ENCODE measurements at regions of chr17 and their contacts with region 1.

Region 1: DNA sequence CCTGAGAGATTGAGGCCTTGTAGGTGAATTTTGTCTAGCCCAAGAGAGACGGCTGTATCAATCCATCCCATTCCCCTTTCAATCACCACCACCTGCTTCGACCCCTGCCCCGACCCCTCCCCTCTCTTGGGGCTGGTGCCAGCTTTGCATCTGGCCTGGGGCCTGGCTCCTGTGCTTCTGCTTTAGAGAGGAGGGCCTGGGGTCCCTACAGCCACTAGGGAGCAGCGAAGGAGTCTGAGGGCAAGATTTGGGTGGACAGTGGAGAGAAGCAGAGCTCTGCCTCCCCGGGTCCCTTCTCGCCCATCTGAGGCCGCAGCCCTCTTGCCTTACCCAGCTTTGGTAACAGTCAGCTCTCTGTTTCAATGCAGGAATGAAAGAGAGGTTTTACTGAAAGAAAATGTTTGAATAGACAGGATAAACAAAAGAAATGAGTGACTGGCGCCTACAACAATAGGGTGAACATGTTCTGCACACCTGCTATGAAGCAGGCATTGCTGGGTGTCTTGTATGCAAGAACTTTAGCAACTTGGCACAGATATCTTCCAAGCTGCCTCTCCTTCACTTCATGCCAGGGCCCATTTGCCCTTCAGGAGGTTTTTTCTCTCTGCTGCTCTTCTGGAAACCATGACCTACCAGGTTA is 57.4 kb downstream of the SLC47A1 start:
- DNase-seq: no peak
- H3K4me3 ChIP-seq: no peak overlapping the region
- H3K4me3 Mint-ChIP-seq: no peak overlapping the region
- H3K27ac ChIP-seq: no peak overlapping the region
- H3K27ac Mint-ChIP-seq: peak overlapping the region in 2 of 7 donors; percentile 25 to 65
- H3K4me1 ChIP-seq: peaks cover 9 to 24% of the 10 kb centered on the region in 2 donors
- H3K4me1 Mint-ChIP-seq: peaks cover 19% of the 10 kb centered on the region
- H3K27me3 ChIP-seq: no peaks in the 10 kb centered on the region
- H3K27me3 Mint-ChIP-seq: peaks cover 0 to 2% (median 1%) of the 10 kb centered on the region in 3 donors
- CTCF ChIP-seq: no peak

Region 2: DNA sequence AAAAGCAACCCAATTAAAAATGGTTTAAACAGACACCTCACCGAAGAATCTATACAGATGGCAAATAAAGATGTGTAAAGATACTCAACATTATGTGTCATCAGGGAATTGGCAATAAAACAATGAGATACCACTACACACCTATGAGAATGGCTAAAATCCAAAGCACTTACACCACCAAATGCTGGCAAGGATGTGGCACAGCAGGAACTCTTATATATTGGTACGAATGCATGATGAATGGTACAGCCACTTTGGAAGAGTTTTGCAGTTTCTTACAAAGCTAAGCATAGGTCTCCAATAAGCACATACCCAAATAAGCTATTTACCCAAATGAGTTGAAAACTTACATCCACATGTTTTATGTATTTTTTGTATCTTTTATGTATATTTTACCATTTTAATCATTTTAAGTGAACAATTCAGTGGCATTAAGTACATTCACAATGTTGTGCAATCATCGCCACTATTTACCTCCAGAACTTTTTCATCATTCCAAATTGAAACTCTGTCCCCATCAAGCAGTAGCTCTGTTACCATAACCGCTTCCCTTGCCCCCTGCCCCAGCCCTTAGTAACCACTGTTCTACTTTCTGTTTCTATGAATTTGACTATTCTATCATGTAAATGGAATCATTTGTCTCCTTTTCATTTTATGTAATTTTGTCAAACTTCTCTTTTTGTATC is 50.8 kb after region 1 on chr17:
- intact Hi-C with region 1: loop called in 1 of 2 experiments (anchors 2 kb)
- DNase-seq: no peak
- H3K4me3 ChIP-seq: no peak overlapping the region
- H3K4me3 Mint-ChIP-seq: no peak overlapping the region
- H3K27ac ChIP-seq: no peak overlapping the region
- H3K27ac Mint-ChIP-seq: no peak overlapping the region
- H3K4me1 ChIP-seq: peaks cover 3 to 4% of the 10 kb centered on the region in 2 donors
- H3K4me1 Mint-ChIP-seq: peaks cover 13% of the 10 kb centered on the region
- H3K27me3 ChIP-seq: no peaks in the 10 kb centered on the region
- H3K27me3 Mint-ChIP-seq: peaks cover 0 to 2% (median 1%) of the 10 kb centered on the region in 3 donors
- CTCF ChIP-seq: no peak